ENCODE measurements at regions of chr12 and their contacts with region 1.

Region 1: DNA sequence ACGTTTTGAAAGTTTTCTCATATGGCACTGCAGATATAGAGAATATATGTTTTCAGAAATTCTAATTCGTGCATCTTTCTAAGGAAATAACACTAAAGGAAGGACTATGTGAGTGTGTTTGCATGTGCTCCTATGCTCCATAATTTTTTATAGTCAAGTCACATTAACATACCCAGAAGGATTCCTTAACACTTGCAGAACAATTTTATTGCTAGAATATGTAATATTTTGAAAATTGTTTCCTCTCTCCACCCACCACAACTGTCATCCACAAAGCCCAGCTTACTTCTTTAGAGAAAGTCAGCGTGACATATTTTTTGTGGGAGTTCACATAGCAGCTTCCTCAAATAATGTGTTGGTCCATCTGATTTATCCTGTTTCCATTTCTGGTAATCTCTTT is 604.6 kb upstream of the MGAT4C start:
- DNase-seq: no peak
- H3K4me3 ChIP-seq: no peak overlapping the region
- H3K27ac ChIP-seq: no peak overlapping the region
- H3K4me1 ChIP-seq: no peaks in the 10 kb centered on the region
- H3K27me3 ChIP-seq: no peaks in the 10 kb centered on the region
- CTCF ChIP-seq: no peak

Region 2: DNA sequence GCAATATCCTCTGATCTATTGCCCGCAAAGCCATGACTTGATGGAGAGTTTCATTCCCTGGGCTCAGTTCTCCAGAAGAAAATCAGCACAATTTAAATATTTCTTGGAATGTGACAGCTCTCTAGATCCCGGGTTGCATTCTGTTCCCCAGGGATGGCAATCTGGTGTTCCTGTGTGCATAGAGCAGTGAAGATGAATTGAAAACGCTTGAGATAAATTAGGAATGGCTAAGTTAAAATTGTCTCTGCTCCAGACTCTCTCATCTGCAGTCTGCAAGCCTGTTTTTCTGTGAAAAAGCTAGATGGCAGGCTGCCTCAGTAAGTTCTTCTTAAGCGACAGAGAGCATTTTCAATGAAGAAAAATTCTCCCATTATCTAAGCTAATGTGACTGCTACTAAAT is 22.1 kb before region 1 on chr12:
- intact Hi-C with region 1: loop called (anchors 2 kb)
- DNase-seq: no peak
- H3K4me3 ChIP-seq: no peak overlapping the region
- H3K27ac ChIP-seq: no peak overlapping the region
- H3K4me1 ChIP-seq: no peaks in the 10 kb centered on the region
- H3K27me3 ChIP-seq: no peaks in the 10 kb centered on the region
- CTCF ChIP-seq: no peak

Region 3: DNA sequence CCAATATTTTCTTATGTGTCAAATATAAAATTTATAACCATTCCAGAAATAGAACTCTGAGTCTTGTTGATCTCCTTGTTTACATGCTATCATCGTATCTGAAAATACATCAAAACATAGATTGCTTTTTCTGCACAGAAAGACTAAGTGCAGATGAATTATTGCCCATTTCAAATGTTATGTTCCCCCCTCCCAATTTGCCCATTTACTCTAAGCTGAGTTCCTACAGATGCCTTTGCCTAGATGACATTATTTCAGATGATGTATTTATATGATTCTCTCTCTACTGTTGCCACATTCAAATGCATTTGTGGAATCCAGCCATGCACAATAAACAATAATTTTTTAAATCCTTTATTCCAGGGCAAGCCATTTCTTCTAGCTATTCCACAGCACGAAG is 205.6 kb after region 1 on chr12:
- intact Hi-C with region 1: no loop called
- DNase-seq: no peak
- H3K4me3 ChIP-seq: no peak overlapping the region
- H3K27ac ChIP-seq: no peak overlapping the region
- H3K4me1 ChIP-seq: no peaks in the 10 kb centered on the region
- H3K27me3 ChIP-seq: no peaks in the 10 kb centered on the region
- CTCF ChIP-seq: no peak